ENCODE measurements at regions of chrX and their contacts with region 1.

Region 1: DNA sequence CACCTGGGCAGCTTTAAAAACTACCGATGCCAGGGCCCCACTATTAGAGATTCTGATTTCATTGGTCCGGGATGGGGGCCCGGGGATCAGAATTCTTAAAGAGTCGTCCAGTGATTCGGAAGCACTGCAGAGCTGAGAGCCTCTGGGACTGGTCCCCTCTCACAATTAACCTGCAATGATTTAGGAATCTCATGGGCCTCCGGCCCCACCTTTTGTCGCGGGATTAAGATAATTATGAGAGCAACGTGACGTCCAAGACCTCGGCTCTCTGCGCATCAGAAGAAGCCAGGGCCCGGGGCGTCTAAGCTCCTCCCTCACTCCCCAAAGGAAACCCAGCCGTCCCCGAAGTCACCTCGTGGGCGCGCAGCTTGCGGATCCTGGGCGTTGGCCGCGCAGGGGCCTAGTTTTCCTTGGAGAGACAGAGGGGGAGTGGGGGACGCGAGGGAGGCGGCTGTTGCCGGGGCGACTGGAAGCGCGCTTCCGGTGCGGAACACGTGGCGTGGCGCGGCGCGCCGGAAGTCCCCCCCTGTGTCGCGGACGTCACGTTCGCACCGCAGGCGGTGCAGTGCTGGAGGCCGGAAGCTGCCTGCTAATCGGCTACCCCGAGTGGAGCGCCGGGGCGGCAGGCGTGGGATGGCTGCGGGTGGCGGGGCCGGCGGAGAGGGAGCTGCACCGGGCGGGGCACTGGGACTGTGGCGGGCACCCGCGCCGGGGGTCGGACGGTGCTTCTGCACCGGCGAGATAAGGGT is at the start of gene GEMIN8:
- DNase-seq: peak; percentile 93
- H3K4me3 ChIP-seq: peak within 1 kb of the TSS; percentile 55 to 85 (median 58)
- H3K27ac ChIP-seq: peak within 1 kb of the TSS; percentile 87
- H3K4me1 ChIP-seq: peaks cover 49% of the 10 kb centered on the region
- H3K27me3 ChIP-seq: no peaks in the 10 kb centered on the region
- CTCF ChIP-seq: no peak
- total RNA-seq, gene GEMIN8: 14.7 to 25.9 TPM

Region 2: DNA sequence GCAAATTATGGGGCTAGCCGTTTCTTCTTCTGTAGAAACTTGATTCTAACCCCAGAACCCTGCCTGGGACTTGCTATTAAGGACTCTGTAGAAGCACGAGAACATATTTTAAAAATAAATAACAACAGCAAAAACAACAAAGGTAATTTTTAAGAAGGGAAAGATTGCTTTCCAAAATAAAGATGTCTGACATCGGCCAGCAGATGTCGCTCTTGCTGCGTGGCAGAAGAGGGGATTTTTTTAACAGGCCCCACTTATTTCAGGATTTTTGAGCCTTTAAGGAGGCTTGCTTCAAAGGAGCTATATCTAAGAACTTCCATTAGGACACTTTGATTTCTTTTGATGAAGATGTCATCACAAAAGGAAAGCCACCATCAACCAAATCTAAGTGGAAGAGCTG is 523.0 kb before region 1 on chrX:
- CTCF ChIA-PET with region 1: interaction called, 3 read pairs
- dilution Hi-C with region 1: no loop called
- in situ Hi-C with region 1: loop called (anchors 10 kb)
- intact Hi-C with region 1: loop called (anchors 1 kb)
- DNase-seq: peak; percentile 18
- H3K4me3 ChIP-seq: no peak overlapping the region
- H3K27ac ChIP-seq: no peak overlapping the region
- H3K4me1 ChIP-seq: no peaks in the 10 kb centered on the region
- H3K27me3 ChIP-seq: no peaks in the 10 kb centered on the region
- CTCF ChIP-seq: peak; percentile 82 to 83

Region 3: GRCh38 chrX:13653022-13653693 is 376.4 kb before region 1 on chrX and contains the start of gene TCEANC:
- CTCF ChIA-PET with region 1: no interaction called
- dilution Hi-C with region 1: no loop called
- in situ Hi-C with region 1: loop called (anchors 5 kb)
- intact Hi-C with region 1: loop called (anchors 1 kb)
- DNase-seq: peak; percentile 98
- H3K4me3 ChIP-seq: peak within 1 kb of the TSS; percentile 54 to 74 (median 70)
- H3K27ac ChIP-seq: peak within 1 kb of the TSS; percentile 82
- H3K4me1 ChIP-seq: peaks cover 11% of the 10 kb centered on the region
- H3K27me3 ChIP-seq: no peaks in the 10 kb centered on the region
- CTCF ChIP-seq: no peak
- total RNA-seq, gene TCEANC: 3.9 to 4.2 TPM

Region 4: GRCh38 chrX:13750204-13750603 is 279.4 kb before region 1 on chrX:
- CTCF ChIA-PET with region 1: interaction called, 4 read pairs
- dilution Hi-C with region 1: no loop called
- in situ Hi-C with region 1: loop called (anchors 5 to 10 kb)
- intact Hi-C with region 1: loop called (anchors 1 kb)
- DNase-seq: peak; percentile 60
- H3K4me3 ChIP-seq: no peak overlapping the region
- H3K27ac ChIP-seq: no peak overlapping the region
- H3K4me1 ChIP-seq: peaks cover 15% of the 10 kb centered on the region
- H3K27me3 ChIP-seq: no peaks in the 10 kb centered on the region
- CTCF ChIP-seq: peak; percentile 75 to 78

Region 5: DNA sequence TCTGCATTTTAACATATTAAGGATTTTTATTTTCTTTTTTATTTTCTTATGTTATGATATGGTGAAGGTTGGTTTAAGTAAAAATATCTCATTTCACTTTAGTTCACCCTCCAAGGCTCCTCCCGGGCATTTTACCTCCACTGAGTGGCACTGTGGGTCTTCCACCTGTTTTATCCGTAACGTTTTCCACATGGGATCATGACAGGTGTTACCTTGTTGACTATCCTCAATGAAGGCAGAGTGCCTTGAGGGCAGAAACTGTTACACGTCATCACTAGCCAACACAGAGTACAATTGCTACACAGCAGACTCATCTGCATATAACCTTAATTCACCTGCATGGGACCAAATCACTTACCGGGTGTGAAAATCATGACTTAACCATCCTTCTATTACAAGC is 105.8 kb before region 1 on chrX:
- CTCF ChIA-PET with region 1: no interaction called
- dilution Hi-C with region 1: no loop called
- in situ Hi-C with region 1: loop called in 1 of 2 experiments (anchors 10 kb)
- intact Hi-C with region 1: loop called (anchors 1 kb)
- DNase-seq: peak; percentile 78
- H3K4me3 ChIP-seq: no peak overlapping the region
- H3K27ac ChIP-seq: no peak overlapping the region
- H3K4me1 ChIP-seq: no peaks in the 10 kb centered on the region
- H3K27me3 ChIP-seq: no peaks in the 10 kb centered on the region
- CTCF ChIP-seq: peak in 1 of 2 donors; percentile 60

Region 6: GRCh38 chrX:13994104-13994503 is 35.5 kb before region 1 on chrX:
- CTCF ChIA-PET with region 1: no interaction called
- dilution Hi-C with region 1: no loop called
- in situ Hi-C with region 1: no loop called
- intact Hi-C with region 1: loop called (anchors 2 kb)
- DNase-seq: no peak
- H3K4me3 ChIP-seq: no peak overlapping the region
- H3K27ac ChIP-seq: peak overlapping the region; percentile 73
- H3K4me1 ChIP-seq: peaks cover 20% of the 10 kb centered on the region
- H3K27me3 ChIP-seq: no peaks in the 10 kb centered on the region
- CTCF ChIP-seq: no peak

Region 7: DNA sequence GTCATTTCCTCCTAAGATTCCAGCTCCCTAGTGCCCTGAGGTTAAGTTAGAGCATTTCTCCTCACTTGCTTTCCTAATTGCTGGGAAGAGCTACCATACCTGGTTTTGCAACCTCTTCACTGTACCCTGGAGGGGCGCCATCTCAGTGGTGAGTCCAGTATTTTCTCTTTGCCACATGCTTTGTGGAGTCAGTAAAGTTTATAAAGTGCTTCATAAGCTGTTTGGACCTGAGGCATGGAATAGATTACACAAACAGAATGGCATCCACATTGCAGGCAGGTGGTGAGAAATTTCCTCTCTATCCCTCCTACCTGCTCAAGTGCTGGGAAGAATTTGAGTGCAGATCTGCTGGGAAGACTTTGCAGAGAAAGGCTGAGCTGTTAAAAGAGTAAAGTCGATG is 104.3 kb after region 1 on chrX:
- CTCF ChIA-PET with region 1: no interaction called
- dilution Hi-C with region 1: no loop called
- in situ Hi-C with region 1: no loop called
- intact Hi-C with region 1: no loop called
- DNase-seq: no peak
- H3K4me3 ChIP-seq: no peak overlapping the region
- H3K27ac ChIP-seq: no peak overlapping the region
- H3K4me1 ChIP-seq: no peaks in the 10 kb centered on the region
- H3K27me3 ChIP-seq: peaks cover 2% of the 10 kb centered on the region
- CTCF ChIP-seq: no peak

Region 8: GRCh38 chrX:14228611-14229010 is 199.0 kb after region 1 on chrX:
- CTCF ChIA-PET with region 1: no interaction called
- dilution Hi-C with region 1: no loop called
- in situ Hi-C with region 1: no loop called
- intact Hi-C with region 1: no loop called
- DNase-seq: peak; percentile 52
- H3K4me3 ChIP-seq: no peak overlapping the region
- H3K27ac ChIP-seq: no peak overlapping the region
- H3K4me1 ChIP-seq: no peaks in the 10 kb centered on the region
- H3K27me3 ChIP-seq: no peaks in the 10 kb centered on the region
- CTCF ChIP-seq: no peak

Region 9: DNA sequence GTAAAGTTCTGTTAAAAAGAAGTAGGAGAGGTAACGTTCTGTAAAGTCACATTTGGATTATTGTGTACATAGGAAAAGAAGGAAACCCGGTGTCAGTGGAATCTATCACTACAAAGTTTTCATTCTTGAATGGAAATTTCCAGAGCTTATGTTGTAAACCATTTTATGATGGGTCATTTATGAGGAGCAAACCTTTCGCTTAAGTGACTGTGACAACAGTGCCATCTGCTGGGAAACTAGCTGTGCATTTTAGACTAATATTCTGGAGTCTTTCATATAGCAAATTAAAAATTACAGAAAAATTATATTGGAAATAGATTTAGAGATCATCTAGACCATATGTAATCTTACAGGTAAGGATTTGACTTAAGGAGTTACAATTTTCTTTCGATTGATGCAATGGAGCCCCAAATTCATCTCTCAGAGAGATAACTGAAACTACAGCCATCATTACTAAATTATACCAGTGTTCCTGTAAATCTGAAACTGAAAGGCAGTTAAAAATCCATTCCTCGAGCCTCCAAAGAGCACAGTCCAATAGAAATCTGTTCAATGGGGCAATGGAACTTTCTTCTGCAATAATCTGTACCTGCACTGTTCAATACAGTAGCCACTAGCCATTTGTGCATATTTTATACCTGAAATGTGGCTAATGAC is 1213.4 kb after region 1 on chrX:
- CTCF ChIA-PET with region 1: no interaction called
- dilution Hi-C with region 1: no loop called
- in situ Hi-C with region 1: loop called in 1 of 2 experiments (anchors 25 kb)
- intact Hi-C with region 1: no loop called
- DNase-seq: peak; percentile 43
- H3K4me3 ChIP-seq: no peak overlapping the region
- H3K27ac ChIP-seq: no peak overlapping the region
- H3K4me1 ChIP-seq: no peaks in the 10 kb centered on the region
- H3K27me3 ChIP-seq: no peaks in the 10 kb centered on the region
- CTCF ChIP-seq: peak; percentile 61 to 74

Measured in mammary epithelial cell (primary cell).